ENCODE measurements at regions of chr7 and their contacts with region 1.

Region 1: GRCh38 chr7:28955718-28956619 is 2.2 kb downstream of the TRIL start:
- DNase-seq: peak; percentile 44 to 57
- ATAC-seq: peak; percentile 55 to 69
- H3K4me3 ChIP-seq: peak overlapping the region; percentile 48 to 85 (median 62)
- H3K27ac ChIP-seq: peak overlapping the region; percentile 45 to 62 (median 52)
- H3K4me1 ChIP-seq: peaks cover 14 to 23% of the 10 kb centered on the region in 2 donors
- H3K27me3 ChIP-seq: peaks cover 13 to 24% (median 20%) of the 10 kb centered on the region in 3 donors
- CTCF ChIP-seq: peak; percentile 41 to 78 (median 66)
- POLR2A ChIP-seq: no peak

Region 2: GRCh38 chr7:28865601-28866144 is 90.3 kb before region 1 on chr7:
- in situ Hi-C with region 1: no loop called
- intact Hi-C with region 1: no loop called
- DNase-seq: no peak
- ATAC-seq: no peak
- H3K4me3 ChIP-seq: no peak overlapping the region
- H3K27ac ChIP-seq: no peak overlapping the region
- H3K4me1 ChIP-seq: peaks cover 0 to 7% of the 10 kb centered on the region in 2 donors
- H3K27me3 ChIP-seq: no peaks in the 10 kb centered on the region
- CTCF ChIP-seq: no peak
- POLR2A ChIP-seq: no peak

Region 3: DNA sequence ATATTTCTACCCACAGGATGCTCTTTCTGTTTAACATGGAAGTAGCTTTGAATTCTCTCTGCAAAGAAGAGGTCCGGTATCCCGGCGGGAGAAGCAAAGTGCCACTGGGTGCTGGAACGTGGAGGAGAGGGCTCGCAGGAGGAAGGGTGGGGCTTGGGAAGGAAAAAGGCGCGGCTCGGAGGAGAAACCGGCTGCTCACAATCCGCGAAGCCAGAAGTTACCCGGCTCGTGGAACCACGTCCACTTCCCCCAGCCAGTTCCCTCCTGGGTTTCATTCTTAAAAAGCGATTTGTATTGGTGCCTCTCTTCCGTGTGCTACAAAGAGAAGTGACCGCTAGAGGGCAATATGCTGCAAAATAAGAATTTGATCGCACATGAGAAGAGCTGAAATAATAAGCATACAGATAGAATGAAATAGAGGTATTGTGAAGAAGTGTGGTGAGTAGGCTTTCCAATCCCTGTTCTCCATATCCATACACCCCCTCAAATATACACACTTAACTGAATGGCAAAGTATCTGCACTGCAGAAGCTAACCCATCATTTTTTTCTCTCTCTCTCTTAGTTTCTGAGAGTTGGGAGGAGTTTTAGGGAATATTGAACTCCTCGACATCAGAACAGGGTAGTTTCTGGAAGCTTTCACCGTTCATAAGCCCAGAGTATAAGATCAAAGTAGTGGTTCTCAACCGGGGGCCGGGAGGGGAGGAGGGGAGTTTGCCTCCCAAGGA is 28.9 kb before region 1 on chr7:
- in situ Hi-C with region 1: no loop called
- intact Hi-C with region 1: loop called (anchors 2 kb)
- DNase-seq: peak; percentile 43 to 47
- ATAC-seq: peak; percentile 82 to 91
- H3K4me3 ChIP-seq: peak overlapping the region; percentile 47 to 67 (median 55)
- H3K27ac ChIP-seq: peak overlapping the region in 3 of 4 donors; percentile 17 to 56 (median 44)
- H3K4me1 ChIP-seq: peaks cover 0 to 8% of the 10 kb centered on the region in 2 donors
- H3K27me3 ChIP-seq: peaks cover 0 to 8% (median 0%) of the 10 kb centered on the region in 3 donors
- CTCF ChIP-seq: peak; percentile 68 to 84 (median 70)
- POLR2A ChIP-seq: no peak

Region 4: DNA sequence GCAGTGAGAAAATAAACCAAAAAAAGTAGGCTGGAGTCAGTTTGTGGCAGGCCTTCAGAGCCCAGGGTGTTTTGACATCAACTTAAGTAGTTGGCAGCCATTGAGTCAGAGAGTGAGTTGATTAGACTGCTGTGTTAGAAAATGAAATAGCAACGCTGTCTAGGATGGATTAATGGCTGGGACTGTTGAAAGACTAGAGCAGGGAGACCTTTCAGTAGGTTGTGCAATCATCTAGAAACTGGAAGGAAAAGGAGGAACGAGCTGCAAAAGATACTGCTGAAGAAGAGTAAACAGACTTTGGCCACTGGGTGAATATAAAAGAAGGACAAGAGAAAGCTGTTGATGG is 30.8 kb after region 1 on chr7:
- in situ Hi-C with region 1: no loop called
- intact Hi-C with region 1: loop called (anchors 2 kb)
- DNase-seq: peak in 1 of 2 donors; percentile 36
- ATAC-seq: peak; percentile 67 to 80
- H3K4me3 ChIP-seq: no peak overlapping the region
- H3K27ac ChIP-seq: peak overlapping the region; percentile 42 to 64 (median 54)
- H3K4me1 ChIP-seq: peaks cover 4 to 14% of the 10 kb centered on the region in 2 donors
- H3K27me3 ChIP-seq: no peaks in the 10 kb centered on the region
- CTCF ChIP-seq: no peak
- POLR2A ChIP-seq: no peak

Region 5: DNA sequence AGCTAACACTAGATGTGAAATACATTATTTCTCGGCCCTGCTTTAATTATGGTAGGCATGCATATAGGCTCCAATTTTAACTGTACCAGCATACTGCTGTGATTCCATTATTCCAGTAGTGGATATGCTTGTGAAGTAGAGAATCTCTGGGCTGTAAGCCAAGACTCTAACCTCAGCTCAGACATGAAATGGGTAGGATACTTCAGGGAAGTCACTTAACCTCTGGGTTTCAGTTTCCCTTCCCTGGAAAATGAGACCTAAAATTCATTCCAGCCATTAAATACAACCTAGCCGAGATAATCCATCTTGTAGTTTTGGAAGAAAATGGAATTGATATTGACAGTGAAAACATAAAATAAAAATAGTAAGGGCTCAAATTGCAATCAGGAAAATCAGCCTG is 61.7 kb after region 1 on chr7:
- in situ Hi-C with region 1: no loop called
- intact Hi-C with region 1: loop called (anchors 10 kb)
- DNase-seq: no peak
- ATAC-seq: no peak
- H3K4me3 ChIP-seq: no peak overlapping the region
- H3K27ac ChIP-seq: no peak overlapping the region
- H3K4me1 ChIP-seq: peaks cover 3 to 19% of the 10 kb centered on the region in 2 donors
- H3K27me3 ChIP-seq: no peaks in the 10 kb centered on the region
- CTCF ChIP-seq: no peak
- POLR2A ChIP-seq: no peak

Region 6: DNA sequence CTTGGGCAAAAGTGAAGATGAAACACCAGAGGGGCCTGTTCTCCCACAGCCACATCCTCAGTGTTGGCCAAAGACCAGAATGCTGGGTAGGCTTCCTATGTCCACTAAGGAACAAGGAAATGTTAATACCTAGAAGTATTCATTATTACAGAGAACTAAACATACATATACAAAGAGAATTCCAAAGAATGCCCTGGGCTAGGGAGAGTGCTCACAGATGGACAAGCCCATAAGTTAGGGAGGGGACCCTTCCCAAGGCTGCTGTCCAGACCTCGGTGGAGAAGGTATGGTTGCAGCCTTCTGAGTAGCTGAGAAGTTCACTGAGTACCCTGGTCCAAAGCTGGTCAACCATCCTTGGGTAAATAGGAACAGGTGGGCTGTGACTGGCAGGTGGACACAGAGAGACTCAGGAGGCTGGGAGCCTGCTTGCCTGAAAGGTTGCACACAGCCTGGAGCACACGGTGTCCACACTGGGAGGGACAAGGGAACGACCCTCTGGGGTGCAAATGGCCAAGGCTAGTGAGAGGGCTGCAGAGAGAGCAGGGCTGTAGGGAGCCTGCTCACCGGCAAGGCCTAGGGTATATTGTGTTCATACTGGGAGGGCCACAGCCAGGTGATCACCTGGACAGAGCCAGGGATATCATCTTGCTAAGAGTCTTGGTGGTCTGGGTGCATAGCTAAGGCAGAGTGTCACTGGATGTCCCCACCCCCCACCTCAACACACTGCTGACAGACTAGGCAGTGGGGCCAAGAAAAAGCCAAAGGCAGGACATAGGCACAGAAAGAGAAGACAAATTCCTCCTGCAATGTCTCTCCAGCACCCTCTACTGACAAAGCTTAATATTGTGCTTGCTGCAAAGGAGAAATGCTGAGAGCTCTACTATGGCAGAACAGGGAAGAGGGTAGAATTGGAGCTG is 150.0 kb after region 1 on chr7:
- in situ Hi-C with region 1: loop called in 1 of 4 experiments (anchors 10 kb)
- intact Hi-C with region 1: loop called (anchors 1 kb)
- DNase-seq: peak in 1 of 2 donors; percentile 24
- ATAC-seq: peak; percentile 80 to 87
- H3K4me3 ChIP-seq: no peak overlapping the region
- H3K27ac ChIP-seq: no peak overlapping the region
- H3K4me1 ChIP-seq: peaks cover 2 to 4% of the 10 kb centered on the region in 2 donors
- H3K27me3 ChIP-seq: no peaks in the 10 kb centered on the region
- CTCF ChIP-seq: peak; percentile 54 to 84 (median 68)
- POLR2A ChIP-seq: no peak

Region 7: GRCh38 chr7:29527505-29528108 is 571.6 kb after region 1 on chr7:
- in situ Hi-C with region 1: no loop called
- intact Hi-C with region 1: no loop called
- DNase-seq: no peak
- ATAC-seq: no peak
- H3K4me3 ChIP-seq: no peak overlapping the region
- H3K27ac ChIP-seq: no peak overlapping the region
- H3K4me1 ChIP-seq: no peaks in the 10 kb centered on the region
- H3K27me3 ChIP-seq: no peaks in the 10 kb centered on the region
- CTCF ChIP-seq: no peak
- POLR2A ChIP-seq: no peak

Region 8: DNA sequence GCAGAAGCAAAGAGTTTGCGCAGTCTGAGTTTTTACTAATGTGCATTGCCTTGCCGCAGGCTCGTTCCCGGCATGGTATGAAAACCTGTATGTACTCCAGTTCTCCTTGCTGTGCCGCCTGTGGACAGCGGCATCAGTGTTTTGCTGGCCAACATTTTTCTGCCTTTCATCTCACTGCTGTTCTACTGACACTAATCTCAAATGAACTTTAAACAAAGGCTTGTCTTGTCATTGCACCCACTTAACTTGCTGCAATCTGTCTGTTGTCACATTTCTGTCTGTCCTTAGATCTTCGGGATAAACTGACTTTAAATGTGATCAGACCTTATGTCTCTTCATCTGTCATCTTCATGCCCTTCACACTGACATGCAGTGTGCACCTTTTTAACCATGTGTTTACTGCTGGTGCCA is 1256.7 kb after region 1 on chr7:
- in situ Hi-C with region 1: no loop called
- intact Hi-C with region 1: no loop called
- DNase-seq: no peak
- ATAC-seq: peak in 1 of 2 donors; percentile 44
- H3K4me3 ChIP-seq: no peak overlapping the region
- H3K27ac ChIP-seq: no peak overlapping the region
- H3K4me1 ChIP-seq: peaks cover 0 to 5% of the 10 kb centered on the region in 2 donors
- H3K27me3 ChIP-seq: no peaks in the 10 kb centered on the region
- CTCF ChIP-seq: no peak
- POLR2A ChIP-seq: no peak